ENCODE measurements at regions of chr10 and their contacts with region 1.

Region 1: DNA sequence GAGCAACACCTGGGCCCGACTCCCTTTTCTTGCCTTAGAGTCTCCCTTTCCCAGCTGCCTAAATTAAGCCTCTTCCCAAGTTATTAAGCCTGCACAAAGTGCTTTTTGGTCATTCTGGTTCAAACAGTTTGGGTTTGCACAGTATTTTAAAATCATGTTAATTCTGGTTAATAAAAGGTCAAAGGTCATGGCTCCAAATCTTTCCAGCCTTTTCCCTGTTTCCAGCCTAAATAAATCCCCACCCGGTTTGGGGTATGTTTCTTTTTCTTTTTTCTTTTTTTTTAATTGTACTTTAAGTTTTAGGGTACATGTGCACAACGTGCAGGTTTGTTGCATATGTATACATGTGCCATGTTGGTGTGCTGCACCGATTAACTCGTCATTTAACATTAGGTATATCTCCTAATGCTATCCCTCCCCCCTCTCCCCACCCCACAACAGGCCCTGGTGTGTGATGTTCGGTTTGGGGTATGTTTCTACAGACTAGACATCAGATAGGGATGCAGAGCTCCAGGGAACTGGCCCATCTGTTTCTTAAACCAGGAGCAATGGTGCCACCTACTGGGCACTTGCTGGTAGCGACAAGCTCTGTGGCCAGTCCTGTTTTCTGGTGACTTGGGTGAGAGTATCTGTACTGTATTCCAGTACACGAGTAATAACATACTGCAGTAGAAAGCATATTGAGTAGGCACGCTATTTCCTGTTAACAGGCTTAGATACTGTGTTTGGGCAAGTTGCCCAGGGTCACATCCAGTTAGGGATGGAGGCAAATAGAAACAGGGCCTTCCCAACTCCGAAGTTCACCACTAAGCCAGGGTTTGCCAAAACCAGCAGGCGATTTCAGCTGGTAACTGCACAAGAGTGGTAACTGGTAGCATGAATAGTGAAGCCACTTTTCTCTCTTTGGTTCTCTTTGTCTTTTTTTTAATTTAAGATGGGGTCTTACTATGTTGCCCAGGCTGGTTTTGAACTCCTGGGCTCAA is 60.6 kb upstream of the TRIM8 start:
- DNase-seq: peak; percentile 88
- CTCF ChIP-seq: peak; percentile 92

Region 2: GRCh38 chr10:102245101-102245931 is 338.4 kb before region 1 on chr10 and contains the start of gene GBF1:
- in situ Hi-C with region 1: loop called (anchors 25 kb)
- DNase-seq: peak; percentile 97
- CTCF ChIP-seq: no peak

Region 3: DNA sequence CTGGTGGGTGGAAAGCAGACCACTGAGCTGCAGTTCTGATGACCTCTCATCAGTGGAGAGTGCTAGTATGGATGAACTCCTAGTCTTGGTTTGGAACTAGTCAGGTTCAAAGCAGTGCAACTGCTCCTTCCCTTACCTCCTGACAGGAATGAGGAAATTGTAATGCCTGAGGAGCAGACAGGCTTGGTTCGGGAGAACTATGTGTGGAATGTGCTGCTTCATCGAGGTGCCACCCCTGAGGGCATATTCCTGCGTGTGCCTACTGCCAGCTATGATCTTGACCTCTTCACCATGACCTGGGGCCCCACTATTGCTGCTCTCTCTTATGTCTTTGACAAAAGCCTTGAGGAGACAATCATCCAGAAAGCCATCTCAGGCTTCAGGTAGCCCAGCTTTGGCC is 215.7 kb before region 1 on chr10:
- in situ Hi-C with region 1: no loop called
- DNase-seq: no peak
- CTCF ChIP-seq: no peak

Region 4: DNA sequence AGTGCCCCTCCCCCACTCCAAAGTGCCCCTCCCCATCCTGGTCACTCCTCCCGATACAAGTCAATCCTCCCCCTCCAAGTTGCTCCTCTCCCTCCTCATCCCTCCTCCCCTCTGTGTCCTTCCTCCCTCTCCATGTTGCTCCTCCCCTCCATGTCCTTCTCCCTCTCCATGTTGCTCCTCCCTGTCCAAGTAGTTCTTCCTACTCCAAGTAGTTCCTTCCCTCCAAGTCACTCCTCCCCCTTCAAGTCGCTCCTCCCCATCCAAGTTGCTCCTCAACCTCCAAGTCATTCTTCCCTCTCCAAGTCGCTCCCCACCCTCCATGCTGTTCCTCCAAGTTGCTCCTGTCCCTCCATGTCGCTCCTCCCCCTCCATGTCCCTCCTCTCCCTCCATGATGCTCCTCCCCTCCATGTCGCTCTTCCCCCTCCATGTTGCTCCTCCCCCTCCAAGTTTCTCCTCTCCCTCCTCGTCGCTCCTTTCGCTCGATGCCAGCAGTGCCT is 151.4 kb after region 1 on chr10:
- in situ Hi-C with region 1: no loop called
- DNase-seq: no peak
- CTCF ChIP-seq: no peak

Region 5: DNA sequence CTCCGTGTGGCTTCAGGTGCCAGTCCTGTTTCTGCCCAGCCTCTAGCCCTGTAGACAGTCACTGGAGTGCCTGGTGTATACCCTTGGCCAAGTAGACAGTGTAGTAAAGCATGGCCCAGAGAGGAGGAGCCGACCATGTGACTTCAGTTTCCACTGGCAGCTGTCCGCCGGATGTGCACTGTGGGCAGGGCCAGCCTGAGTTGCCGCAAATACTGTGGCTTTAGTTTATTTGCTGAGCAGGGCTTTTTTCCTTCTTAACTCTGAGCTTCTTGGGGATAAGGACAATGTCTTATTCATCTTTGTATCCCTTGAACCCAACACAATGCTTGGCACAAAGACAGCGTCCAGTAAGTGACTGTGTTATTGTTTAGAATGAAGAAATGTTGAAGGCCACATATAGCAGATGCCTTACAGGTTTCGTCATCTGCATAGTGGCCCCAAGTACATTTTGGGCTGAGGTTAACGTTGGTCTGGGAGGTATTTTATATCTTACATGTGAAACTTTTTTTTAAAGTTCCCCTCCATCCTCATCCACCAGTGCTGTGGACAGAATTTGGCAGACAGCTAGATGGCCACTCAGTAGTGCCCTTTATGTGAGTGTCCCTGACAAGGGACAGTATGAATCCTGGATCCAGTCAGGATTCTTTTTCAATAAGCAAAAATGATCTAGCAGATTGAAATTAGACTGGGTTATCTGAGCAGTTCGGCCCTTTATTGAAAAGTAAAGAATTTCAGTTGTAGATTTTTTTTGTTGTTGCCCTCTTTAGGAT is 212.9 kb after region 1 on chr10:
- in situ Hi-C with region 1: no loop called
- DNase-seq: peak; percentile 67
- CTCF ChIP-seq: no peak

Measured in GM13977 (cell line).